PC-9 (cell line): ENCODE measurements at regions of chr1 and their contacts with region 1.

Region 1: DNA sequence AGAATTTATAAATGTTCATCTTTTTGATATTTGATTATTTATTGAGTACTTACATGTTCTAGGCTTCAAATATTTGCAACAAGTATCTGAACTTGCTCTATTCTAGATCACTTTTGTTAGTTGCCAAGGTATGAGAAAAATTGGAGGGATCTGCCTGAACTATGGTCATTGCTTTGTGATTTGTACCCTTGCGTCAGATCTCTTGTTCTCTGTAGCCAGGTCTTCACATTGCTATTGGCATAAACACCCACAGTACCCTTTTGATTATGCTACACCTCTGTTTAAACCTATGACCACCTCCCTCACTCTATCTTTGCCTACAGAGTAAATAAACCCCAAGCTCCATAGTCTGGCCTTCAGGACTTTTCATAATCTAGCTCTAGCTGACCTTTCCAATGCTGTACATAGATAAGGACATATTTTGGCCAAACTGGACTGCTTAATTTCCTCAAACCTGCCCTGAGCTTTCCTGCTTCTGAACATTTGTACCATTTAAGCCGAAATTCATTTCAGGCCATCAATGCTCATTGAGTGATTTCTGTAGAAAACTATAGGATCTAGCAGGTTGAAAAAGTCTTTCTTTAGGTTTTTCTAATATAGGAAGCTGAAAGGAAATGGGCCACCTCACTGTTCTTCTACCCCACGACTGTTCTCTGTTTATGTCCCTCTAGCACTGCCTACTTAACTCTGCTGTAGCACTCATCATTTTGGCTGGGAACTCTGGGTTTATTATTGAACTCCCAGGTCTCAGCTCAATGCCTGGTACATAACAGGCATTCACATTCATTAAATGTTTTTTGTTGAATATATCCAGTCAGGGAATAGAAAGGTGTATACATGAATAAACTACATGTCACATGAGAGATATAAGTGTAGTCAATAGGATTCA is 84.9 kb downstream of the PPP1R12B start:
- DNase-seq: no peak
- H3K4me3 ChIP-seq: no peak overlapping the region
- H3K27ac ChIP-seq: no peak overlapping the region
- H3K4me1 ChIP-seq: no peaks in the 10 kb centered on the region
- H3K27me3 ChIP-seq: no peaks in the 10 kb centered on the region
- CTCF ChIP-seq: no peak

Region 2: DNA sequence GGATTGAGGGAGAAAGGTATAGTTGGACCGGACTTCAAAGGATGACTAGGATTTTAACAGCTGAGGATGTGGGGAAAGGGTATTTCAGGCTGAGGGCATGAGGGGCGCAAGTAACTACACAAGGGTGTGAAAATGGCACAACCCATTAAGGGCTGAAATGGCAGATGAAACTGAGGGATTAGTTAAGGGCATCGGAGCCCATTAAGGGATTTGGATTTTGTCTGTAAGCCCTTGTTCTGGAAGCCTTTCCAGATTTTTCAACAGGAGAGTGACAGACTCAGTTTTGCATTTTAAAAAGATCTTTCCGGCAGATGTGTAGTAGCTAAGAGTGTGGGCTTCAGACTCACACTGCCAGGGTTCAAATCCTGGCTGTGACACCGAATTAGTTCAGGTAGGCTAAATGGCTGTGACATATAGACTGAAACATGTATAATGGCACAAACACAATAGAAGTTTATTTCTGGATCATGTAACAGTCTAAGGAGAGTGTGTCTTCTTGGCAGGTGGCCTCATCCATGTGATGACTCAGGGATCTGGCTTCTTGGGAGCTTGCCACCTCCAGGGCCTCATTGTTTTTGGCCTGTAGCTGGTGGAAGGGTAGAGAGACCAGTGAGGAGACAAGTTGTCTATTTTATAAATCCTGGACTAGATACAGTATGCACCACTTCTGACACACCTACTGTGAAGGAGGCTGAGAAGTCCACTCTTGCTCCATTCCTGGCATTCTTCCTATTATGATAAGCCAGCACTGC is 141.3 kb before region 1 on chr1:
- CTCF ChIA-PET with region 1: interaction called, 15 read pairs
- POLR2A ChIA-PET with region 1: no interaction called
- intact Hi-C with region 1: no loop called
- DNase-seq: peak; percentile 61 to 83
- H3K4me3 ChIP-seq: no peak overlapping the region
- H3K27ac ChIP-seq: no peak overlapping the region
- H3K4me1 ChIP-seq: peaks cover 17% of the 10 kb centered on the region
- H3K27me3 ChIP-seq: no peaks in the 10 kb centered on the region
- CTCF ChIP-seq: no peak

Region 3: DNA sequence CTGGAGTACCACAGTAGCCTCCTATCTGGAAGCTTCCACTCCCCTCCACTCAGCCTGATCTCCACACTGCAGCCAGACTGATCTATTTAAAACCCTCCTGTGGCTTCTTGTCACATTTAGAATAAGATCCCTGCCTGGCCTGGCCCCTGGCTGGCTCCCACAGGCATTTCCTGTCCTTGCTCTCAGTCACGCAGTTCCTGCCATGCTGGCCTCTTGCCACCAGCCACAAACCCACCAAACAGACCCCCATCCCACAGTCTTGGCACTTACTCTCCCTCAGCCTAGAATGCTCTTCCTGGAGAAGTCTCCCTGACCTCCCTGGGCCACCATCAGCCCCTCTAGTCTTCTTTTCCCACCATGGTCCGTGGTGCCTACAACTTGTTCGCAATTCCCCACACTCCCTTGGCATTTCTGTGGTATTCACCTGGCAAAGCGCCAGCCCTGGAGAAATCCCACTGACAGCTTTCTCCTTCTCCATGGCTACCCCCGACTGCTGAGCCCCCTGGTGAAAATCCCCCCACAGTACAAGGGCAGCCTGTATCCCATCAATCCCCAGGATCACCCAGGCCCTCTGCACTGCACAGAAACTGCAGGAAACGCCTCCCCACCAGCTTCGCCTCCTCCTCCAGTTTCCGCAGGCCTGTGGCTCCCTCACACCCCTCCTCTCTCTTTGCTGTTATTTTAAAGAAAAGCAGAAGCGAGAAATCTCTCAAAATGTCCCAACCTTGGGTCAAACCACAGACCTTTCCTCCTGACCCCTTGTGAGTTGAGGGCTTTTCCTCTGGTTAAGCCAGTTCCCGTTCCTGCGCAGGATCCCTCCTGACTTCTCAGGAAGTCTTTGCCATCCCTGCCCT is 182.3 kb after region 1 on chr1:
- CTCF ChIA-PET with region 1: no interaction called
- POLR2A ChIA-PET with region 1: no interaction called
- intact Hi-C with region 1: no loop called
- DNase-seq: peak in 1 of 2 experiments; percentile 38
- H3K4me3 ChIP-seq: no peak overlapping the region
- H3K27ac ChIP-seq: no peak overlapping the region
- H3K4me1 ChIP-seq: no peaks in the 10 kb centered on the region
- H3K27me3 ChIP-seq: no peaks in the 10 kb centered on the region
- CTCF ChIP-seq: no peak

Region 4: DNA sequence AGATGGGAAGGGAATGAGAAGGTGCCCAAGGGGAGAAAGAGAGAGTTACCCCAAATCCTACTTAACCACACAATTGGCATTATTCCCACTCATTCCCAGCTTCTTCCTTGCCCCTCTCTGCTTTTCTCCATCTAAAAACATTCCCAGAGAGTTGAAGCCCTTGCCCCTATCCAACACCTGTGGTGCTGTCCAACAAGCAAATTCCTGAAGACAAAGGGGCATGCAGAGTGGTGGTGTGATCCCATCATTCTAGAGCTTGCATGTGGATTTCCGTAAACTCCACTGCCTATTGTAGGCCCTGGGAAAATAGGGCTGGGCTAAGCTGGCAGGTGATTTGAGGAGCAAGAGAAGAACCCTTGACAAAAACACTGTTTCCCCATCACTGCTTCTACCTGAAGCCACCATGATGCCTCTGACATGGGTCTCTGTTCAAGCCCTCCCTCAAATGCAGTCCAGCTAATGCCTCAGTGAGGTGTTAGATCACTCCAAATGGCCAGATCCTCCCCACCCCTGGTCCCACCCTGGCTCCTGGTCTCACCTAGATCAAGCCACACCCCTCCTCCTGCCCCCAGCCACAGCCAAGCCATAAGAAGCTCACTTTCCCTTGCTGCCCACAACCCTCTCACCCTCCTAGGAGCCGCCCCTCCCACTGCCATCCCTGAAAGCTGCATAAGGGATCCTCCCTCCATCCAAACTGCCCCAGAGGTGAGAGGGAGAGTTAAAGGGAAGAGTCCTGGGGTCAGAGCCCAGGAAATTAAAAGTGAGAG is 247.4 kb after region 1 on chr1:
- CTCF ChIA-PET with region 1: no interaction called
- POLR2A ChIA-PET with region 1: no interaction called
- intact Hi-C with region 1: no loop called
- DNase-seq: no peak
- H3K4me3 ChIP-seq: no peak overlapping the region
- H3K27ac ChIP-seq: no peak overlapping the region
- H3K4me1 ChIP-seq: no peaks in the 10 kb centered on the region
- H3K27me3 ChIP-seq: peaks cover 96% of the 10 kb centered on the region
- CTCF ChIP-seq: no peak

Region 5: DNA sequence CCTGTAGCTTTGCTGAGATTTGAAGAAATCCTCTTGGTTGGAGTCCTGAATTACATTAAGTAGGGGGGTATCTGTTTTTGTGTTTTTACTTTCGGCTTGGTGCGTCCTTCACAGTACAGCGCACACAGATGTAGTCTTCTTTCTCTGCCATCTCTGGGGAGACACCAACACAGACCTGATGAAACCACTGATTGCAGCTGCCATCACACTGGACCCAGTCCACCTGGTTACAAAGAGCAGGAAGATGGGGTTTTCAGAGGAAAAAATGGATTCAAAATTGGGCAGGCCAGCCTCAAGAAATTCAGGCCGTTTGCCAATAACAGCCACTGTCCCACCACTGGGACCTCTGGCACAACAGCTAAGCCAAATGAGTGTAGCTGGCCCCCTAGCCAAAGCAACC is 295.6 kb after region 1 on chr1:
- CTCF ChIA-PET with region 1: no interaction called
- POLR2A ChIA-PET with region 1: no interaction called
- intact Hi-C with region 1: no loop called
- DNase-seq: no peak
- H3K4me3 ChIP-seq: no peak overlapping the region
- H3K27ac ChIP-seq: no peak overlapping the region
- H3K4me1 ChIP-seq: no peaks in the 10 kb centered on the region
- H3K27me3 ChIP-seq: no peaks in the 10 kb centered on the region
- CTCF ChIP-seq: no peak